ENCODE measurements at regions of chr11 and their contacts with region 1.

Region 1: GRCh38 chr11:1572197-1573076 is at the start of gene DUSP8:
- DNase-seq: peak; percentile 93
- H3K4me3 Mint-ChIP-seq: peak within 1 kb of the TSS; percentile 42
- H3K27ac Mint-ChIP-seq: no peak within 1 kb of the TSS
- H3K4me1 Mint-ChIP-seq: peaks cover 16% of the 10 kb centered on the region
- H3K27me3 Mint-ChIP-seq: peaks cover 2% of the 10 kb centered on the region
- total RNA-seq, gene DUSP8: 1.6 to 2.4 TPM

Region 2: GRCh38 chr11:1121813-1122663 is 450.4 kb before region 1 on chr11:
- CTCF ChIA-PET with region 1: no interaction called
- POLR2A ChIA-PET with region 1: no interaction called
- intact Hi-C with region 1: no loop called
- DNase-seq: peak; percentile 6
- H3K4me3 Mint-ChIP-seq: no peak overlapping the region
- H3K27ac Mint-ChIP-seq: no peak overlapping the region
- H3K4me1 Mint-ChIP-seq: no peaks in the 10 kb centered on the region
- H3K27me3 Mint-ChIP-seq: peaks cover 2% of the 10 kb centered on the region

Region 3: GRCh38 chr11:1262172-1263006 is 310.0 kb before region 1 on chr11:
- CTCF ChIA-PET with region 1: interaction called, 13 read pairs
- POLR2A ChIA-PET with region 1: interaction called, 3 read pairs
- intact Hi-C with region 1: loop called (anchors 2 kb)
- DNase-seq: peak; percentile 94
- H3K4me3 Mint-ChIP-seq: peak overlapping the region; percentile 81
- H3K27ac Mint-ChIP-seq: peak overlapping the region; percentile 89
- H3K4me1 Mint-ChIP-seq: peaks cover 17% of the 10 kb centered on the region
- H3K27me3 Mint-ChIP-seq: no peaks in the 10 kb centered on the region

Region 4: GRCh38 chr11:1453611-1454034 is 118.8 kb before region 1 on chr11:
- CTCF ChIA-PET with region 1: interaction called, 21 read pairs
- POLR2A ChIA-PET with region 1: interaction called, 3 read pairs
- intact Hi-C with region 1: loop called (anchors 1 kb)
- DNase-seq: peak; percentile 83
- H3K4me3 Mint-ChIP-seq: no peak overlapping the region
- H3K27ac Mint-ChIP-seq: no peak overlapping the region
- H3K4me1 Mint-ChIP-seq: no peaks in the 10 kb centered on the region
- H3K27me3 Mint-ChIP-seq: no peaks in the 10 kb centered on the region

Region 5: GRCh38 chr11:1540074-1540473 is 32.4 kb before region 1 on chr11:
- CTCF ChIA-PET with region 1: interaction called, 12 read pairs
- POLR2A ChIA-PET with region 1: no interaction called
- intact Hi-C with region 1: loop called (anchors 5 kb)
- DNase-seq: no peak
- H3K4me3 Mint-ChIP-seq: no peak overlapping the region
- H3K27ac Mint-ChIP-seq: no peak overlapping the region
- H3K4me1 Mint-ChIP-seq: peaks cover 6% of the 10 kb centered on the region
- H3K27me3 Mint-ChIP-seq: no peaks in the 10 kb centered on the region

Region 6: DNA sequence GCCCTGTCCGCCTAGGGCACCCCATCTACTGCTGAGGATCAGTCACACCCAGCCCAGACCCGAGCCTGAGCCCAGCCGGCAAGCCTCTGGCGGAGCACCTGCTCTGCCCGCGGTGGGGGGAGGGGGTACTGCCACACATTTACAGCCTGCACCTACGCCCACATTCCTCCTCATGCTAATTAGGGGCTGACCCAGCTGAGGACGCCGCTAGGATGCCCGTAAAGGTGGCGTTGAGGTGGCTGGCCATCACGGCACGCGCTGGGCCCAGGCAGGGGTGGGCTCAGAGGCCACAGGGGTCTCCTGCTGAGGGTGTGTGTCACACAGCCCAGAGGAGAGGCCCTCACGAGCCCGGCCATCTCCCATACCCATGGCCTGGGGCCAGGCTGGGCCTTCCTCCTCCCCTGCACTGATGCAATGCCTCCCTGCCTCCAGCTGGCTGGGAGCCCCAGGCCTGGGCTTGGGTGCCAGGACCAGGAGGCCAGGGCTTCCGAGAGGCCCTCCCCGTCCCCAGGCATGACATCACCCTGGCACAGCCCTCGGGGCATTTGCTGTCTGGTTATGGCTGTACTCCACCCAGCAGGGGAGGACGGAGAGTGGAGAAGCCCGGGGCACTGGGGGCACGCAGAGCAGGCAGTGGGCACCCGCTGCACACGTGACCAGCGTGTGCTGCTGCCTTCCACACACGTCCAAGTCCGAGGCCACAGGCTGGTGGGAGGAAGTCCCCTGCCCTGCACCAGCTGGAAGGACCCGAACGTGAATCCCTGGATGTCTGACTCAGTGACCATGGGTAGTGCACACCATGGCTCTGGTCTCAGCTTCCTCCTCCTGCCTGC is 13.1 kb before region 1 on chr11:
- CTCF ChIA-PET with region 1: interaction called, 17 read pairs
- POLR2A ChIA-PET with region 1: interaction called, 3 read pairs
- intact Hi-C with region 1: no loop called
- DNase-seq: peak; percentile 28
- H3K4me3 Mint-ChIP-seq: no peak overlapping the region
- H3K27ac Mint-ChIP-seq: no peak overlapping the region
- H3K4me1 Mint-ChIP-seq: no peaks in the 10 kb centered on the region
- H3K27me3 Mint-ChIP-seq: no peaks in the 10 kb centered on the region

Region 7: GRCh38 chr11:1694064-1694845 is 121.8 kb after region 1 on chr11:
- CTCF ChIA-PET with region 1: no interaction called
- POLR2A ChIA-PET with region 1: no interaction called
- intact Hi-C with region 1: no loop called
- DNase-seq: peak; percentile 85
- H3K4me3 Mint-ChIP-seq: no peak overlapping the region
- H3K27ac Mint-ChIP-seq: no peak overlapping the region
- H3K4me1 Mint-ChIP-seq: peaks cover 6% of the 10 kb centered on the region
- H3K27me3 Mint-ChIP-seq: peaks cover 27% of the 10 kb centered on the region

Region 8: DNA sequence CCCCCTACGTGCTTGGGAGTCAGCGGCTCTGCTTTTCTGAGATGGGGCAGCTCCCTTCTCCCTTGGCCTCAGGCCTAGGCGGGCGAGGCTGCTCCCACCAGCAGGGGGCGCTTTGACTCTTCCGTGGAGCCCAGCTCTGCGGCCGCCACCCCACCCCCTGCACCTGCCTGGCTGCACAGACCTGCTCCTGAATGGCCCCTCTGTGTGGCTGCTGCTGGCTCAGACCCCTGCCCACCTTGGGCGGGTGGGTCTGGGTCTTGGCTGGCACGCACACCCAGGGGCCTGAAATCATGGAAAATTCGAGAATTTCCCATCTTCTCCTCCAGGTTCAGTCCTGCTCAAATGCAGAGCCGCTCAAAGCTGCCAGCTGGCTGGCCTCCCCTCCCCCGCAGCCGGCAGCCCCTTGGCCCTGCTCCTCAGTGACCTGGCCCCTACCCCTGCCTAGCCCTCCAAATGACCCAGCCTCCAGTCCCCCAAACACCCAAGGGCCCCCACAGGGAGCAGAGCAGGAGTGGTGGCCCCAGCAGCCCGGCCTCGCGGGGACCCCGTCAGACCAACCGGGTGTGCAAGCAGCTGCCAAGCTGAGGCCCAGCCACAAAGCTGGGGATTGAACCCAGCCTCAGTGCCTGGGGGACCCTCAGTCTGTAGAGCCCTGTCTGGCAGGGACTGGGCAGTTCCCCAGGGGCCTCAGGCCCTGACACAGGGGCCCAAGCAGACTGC is 310.2 kb after region 1 on chr11:
- CTCF ChIA-PET with region 1: no interaction called
- POLR2A ChIA-PET with region 1: no interaction called
- intact Hi-C with region 1: no loop called
- DNase-seq: peak; percentile 82
- H3K4me3 Mint-ChIP-seq: no peak overlapping the region
- H3K27ac Mint-ChIP-seq: no peak overlapping the region
- H3K4me1 Mint-ChIP-seq: no peaks in the 10 kb centered on the region
- H3K27me3 Mint-ChIP-seq: no peaks in the 10 kb centered on the region